ENCODE measurements at regions of chr19 and their contacts with region 1.

Region 1: GRCh38 chr19:2578901-2579677 is 103.2 kb downstream of the GADD45B start:
- DNase-seq: peak; percentile 93 to 96
- ATAC-seq: peak; percentile 92
- H3K4me3 ChIP-seq: peak overlapping the region in 1 of 2 donors; percentile 18
- H3K27ac ChIP-seq: peak overlapping the region; percentile 64 to 95
- H3K4me1 ChIP-seq: no peaks in the 10 kb centered on the region
- H3K27me3 ChIP-seq: no peaks in the 10 kb centered on the region

Region 2: DNA sequence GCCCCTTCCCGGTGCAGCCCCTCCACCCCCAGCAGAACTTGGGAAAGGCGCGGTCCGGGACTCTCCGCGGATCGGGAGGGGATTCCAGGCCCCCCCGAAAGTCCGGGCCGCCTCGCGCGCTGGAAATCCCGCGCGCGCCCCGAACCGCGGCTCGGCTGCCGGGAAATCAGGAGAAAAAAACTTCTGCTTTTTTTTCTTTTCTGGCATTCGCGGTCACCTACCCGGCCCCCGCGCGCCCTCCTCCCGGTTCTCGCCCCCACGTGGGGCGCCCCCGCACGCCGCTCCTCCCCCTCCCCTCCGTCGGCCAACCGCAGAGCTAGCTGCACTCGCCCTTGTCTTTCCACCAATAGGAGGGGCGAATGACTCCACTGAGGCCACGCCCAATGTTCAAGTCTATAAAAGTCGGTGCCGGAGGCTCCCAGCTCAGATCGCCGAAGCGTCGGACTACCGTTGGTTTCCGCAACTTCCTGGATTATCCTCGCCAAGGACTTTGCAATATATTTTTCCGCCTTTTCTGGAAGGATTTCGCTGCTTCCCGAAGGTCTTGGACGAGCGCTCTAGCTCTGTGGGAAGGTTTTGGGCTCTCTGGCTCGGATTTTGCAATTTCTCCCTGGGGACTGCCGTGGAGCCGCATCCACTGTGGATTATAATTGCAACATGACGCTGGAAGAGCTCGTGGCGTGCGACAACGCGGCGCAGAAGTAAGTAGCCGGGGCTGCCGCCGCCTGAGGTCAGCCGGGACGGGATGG is 103.2 kb before region 1 on chr19 and contains the start of gene GADD45B:
- intact Hi-C with region 1: loop called (anchors 1 to 2 kb)
- DNase-seq: peak; percentile 99
- ATAC-seq: peak; percentile 92
- H3K4me3 ChIP-seq: peak within 1 kb of the TSS; percentile 44 to 87
- H3K27ac ChIP-seq: peak within 1 kb of the TSS; percentile 62 to 95
- H3K4me1 ChIP-seq: no peaks in the 10 kb centered on the region
- H3K27me3 ChIP-seq: no peaks in the 10 kb centered on the region
- total RNA-seq, gene GADD45B: 99.5 to 185 TPM

Region 3: DNA sequence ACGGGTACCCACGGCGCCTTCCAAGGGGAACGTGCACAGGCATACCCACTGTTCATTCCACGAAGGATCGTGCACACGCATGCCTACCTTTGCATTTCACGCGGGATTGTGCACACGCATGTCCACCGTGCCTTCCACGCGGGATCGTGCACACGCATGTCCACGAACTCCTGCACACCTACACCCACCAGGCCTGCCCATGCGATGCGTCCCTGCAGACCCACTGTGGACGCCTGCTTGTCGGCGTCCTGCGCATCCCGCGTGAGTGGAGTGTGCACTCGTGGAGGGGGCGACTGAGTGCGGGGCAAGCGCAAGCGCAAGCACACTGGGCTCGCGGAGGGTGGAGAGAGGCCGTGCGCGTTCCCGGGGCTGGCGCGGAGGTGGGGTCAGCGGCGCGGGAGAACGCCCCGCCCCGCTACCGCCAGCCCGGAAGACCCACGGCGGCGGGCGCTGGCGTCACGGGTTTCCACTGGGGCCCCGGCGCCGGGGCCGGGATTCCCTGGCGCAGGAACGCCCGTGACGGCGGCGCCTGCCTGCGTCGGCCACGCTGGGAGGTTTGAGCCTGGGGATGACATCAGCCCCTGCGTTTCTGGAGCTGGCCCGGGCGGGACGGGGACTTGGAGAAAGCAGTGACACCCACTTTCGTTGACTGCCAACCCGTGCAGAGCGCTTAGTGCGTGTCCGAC is 84.5 kb before region 1 on chr19:
- intact Hi-C with region 1: loop called in 1 of 2 experiments (anchors 5 kb)
- DNase-seq: peak; percentile 92 to 96
- ATAC-seq: peak; percentile 88
- H3K4me3 ChIP-seq: peak overlapping the region; percentile 7 to 37
- H3K27ac ChIP-seq: peak overlapping the region in 1 of 2 donors; percentile 51
- H3K4me1 ChIP-seq: no peaks in the 10 kb centered on the region
- H3K27me3 ChIP-seq: no peaks in the 10 kb centered on the region

Region 4: GRCh38 chr19:2543463-2544442 is 35.3 kb before region 1 on chr19:
- intact Hi-C with region 1: loop called (anchors 2 to 5 kb)
- DNase-seq: peak; percentile 97 to 98
- ATAC-seq: peak; percentile 91
- H3K4me3 ChIP-seq: no peak overlapping the region
- H3K27ac ChIP-seq: peak overlapping the region; percentile 62 to 94
- H3K4me1 ChIP-seq: no peaks in the 10 kb centered on the region
- H3K27me3 ChIP-seq: no peaks in the 10 kb centered on the region

Region 5: GRCh38 chr19:2600914-2601870 is 22.1 kb after region 1 on chr19:
- intact Hi-C with region 1: loop called in 1 of 2 experiments (anchors 2 kb)
- DNase-seq: peak in 1 of 2 donors; percentile 62
- ATAC-seq: no peak
- H3K4me3 ChIP-seq: no peak overlapping the region
- H3K27ac ChIP-seq: peak overlapping the region in 1 of 2 donors; percentile 94
- H3K4me1 ChIP-seq: peaks cover 0 to 2% of the 10 kb centered on the region in 2 donors
- H3K27me3 ChIP-seq: no peaks in the 10 kb centered on the region

Region 6: GRCh38 chr19:2610637-2611482 is 31.8 kb after region 1 on chr19:
- intact Hi-C with region 1: loop called (anchors 5 kb)
- DNase-seq: peak; percentile 96 to 99
- ATAC-seq: peak; percentile 94
- H3K4me3 ChIP-seq: peak overlapping the region in 1 of 2 donors; percentile 13
- H3K27ac ChIP-seq: peak overlapping the region; percentile 23 to 94
- H3K4me1 ChIP-seq: no peaks in the 10 kb centered on the region
- H3K27me3 ChIP-seq: no peaks in the 10 kb centered on the region

Region 7: GRCh38 chr19:2636897-2637683 is 58.0 kb after region 1 on chr19:
- intact Hi-C with region 1: no loop called
- DNase-seq: peak; percentile 77 to 90
- ATAC-seq: peak; percentile 75
- H3K4me3 ChIP-seq: no peak overlapping the region
- H3K27ac ChIP-seq: no peak overlapping the region
- H3K4me1 ChIP-seq: peaks cover 0 to 3% of the 10 kb centered on the region in 2 donors
- H3K27me3 ChIP-seq: no peaks in the 10 kb centered on the region

Measured in aorta (tissue), 5 donors.